ENCODE measurements at regions of chr9 and their contacts with region 1.

Region 1: DNA sequence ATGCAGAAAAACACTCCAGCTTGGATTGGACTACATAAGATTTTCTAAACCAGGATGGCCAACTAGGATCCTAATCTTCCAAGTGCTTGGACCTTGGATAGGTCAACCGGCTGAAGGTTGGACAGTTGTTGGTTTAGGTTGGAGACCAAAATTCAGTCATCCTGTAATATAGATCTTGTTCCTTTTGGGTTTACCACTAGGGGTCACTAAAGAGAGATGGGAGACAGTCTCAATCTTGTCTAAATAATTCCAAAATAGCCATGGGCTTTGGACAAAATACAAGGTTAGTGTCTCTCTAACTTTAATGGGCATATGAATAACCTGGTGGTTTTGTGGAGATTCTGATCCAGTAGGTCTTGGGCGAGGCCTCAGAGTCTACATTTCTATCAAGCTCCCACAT is 148.7 kb upstream of the ERCC6L2 start:
- DNase-seq: no peak
- H3K4me3 Mint-ChIP-seq: no peak overlapping the region
- H3K27ac Mint-ChIP-seq: no peak overlapping the region
- H3K4me1 Mint-ChIP-seq: peaks cover 41% of the 10 kb centered on the region
- H3K27me3 Mint-ChIP-seq: peaks cover 14% of the 10 kb centered on the region

Region 2: DNA sequence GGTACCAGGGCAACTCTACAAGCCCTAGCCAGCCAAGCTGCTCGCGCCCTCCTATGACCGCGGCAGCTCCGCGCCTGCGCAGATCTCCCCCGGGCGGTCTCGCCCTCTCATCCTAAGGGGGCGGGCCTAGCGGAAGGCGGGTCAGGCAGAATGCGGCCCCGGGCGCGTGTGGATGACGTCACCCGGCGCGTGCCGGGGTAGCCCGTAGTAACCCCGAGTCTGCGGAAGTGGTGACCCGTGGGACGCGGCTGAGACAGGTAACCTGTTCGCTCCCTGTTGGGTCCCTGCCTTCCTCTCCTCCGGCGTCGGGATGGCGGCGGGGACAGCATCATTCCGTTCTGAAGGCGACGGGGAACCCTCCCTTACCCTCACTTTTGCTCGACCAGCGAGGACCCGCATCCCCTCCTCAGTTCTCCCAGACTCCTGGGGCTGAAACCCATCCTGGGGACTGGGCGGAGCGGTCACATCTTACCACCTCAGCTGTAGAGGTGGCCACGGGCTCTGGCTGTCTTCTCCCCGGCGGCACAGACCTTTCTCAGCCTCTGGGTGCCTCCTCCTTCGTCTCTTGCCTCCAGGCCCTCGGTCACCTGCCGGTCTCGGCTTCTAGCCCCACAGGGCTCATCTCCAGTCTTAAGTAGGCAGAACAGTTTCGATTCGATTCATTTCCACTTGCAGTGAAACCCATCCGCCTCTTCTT is 1000.1 kb before region 1 on chr9 and contains the start of gene AOPEP:
- intact Hi-C with region 1: loop called (anchors 5 kb)
- DNase-seq: peak; percentile 99
- H3K4me3 Mint-ChIP-seq: peak within 1 kb of the TSS; percentile 94
- H3K27ac Mint-ChIP-seq: peak within 1 kb of the TSS; percentile 99
- H3K4me1 Mint-ChIP-seq: peaks cover 12% of the 10 kb centered on the region
- H3K27me3 Mint-ChIP-seq: peaks cover 2% of the 10 kb centered on the region
- total RNA-seq, gene AOPEP: 20.5 and 22.5 TPM in 2 replicates

Region 3: DNA sequence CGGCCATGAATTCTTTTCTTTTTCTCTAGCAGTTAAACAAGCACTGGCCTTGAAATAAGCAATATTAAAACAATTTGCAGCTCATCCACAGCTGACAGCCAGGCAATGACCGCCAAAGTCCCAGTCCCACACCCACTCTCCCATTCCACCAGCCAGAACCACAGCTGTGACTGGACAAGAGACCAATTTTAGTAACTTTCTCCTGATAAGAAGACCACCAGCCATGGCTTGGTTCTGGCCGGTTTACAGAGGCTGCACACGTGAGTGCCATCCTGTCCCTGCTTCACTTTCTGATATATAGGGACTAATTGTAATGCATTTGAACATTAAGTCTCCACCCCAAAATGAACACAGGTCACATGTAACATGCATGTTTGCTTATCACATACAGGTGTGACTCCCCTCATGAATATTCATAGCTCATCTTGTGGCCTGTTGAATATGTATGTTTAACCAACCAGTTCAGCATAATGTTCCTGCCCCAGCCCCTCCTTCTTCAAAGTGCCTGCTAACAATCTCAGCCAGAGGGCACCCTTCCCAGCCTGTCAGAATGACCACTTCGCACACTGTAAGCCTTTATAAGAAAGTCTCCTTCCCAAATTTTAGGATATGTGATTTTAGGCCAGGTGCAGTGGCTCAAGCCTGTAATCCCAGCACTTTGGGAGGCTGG is 385.3 kb before region 1 on chr9:
- intact Hi-C with region 1: loop called (anchors 1 kb)
- DNase-seq: no peak
- H3K4me3 Mint-ChIP-seq: no peak overlapping the region
- H3K27ac Mint-ChIP-seq: no peak overlapping the region
- H3K4me1 Mint-ChIP-seq: peaks cover 11% of the 10 kb centered on the region
- H3K27me3 Mint-ChIP-seq: no peaks in the 10 kb centered on the region

Region 4: GRCh38 chr9:95753762-95754465 is 27.2 kb after region 1 on chr9:
- intact Hi-C with region 1: loop called (anchors 2 kb)
- DNase-seq: no peak
- H3K4me3 Mint-ChIP-seq: no peak overlapping the region
- H3K27ac Mint-ChIP-seq: no peak overlapping the region
- H3K4me1 Mint-ChIP-seq: peaks cover 17% of the 10 kb centered on the region
- H3K27me3 Mint-ChIP-seq: peaks cover 31% of the 10 kb centered on the region

Region 5: GRCh38 chr9:95788021-95788420 is 61.3 kb after region 1 on chr9:
- intact Hi-C with region 1: no loop called
- DNase-seq: no peak
- H3K4me3 Mint-ChIP-seq: no peak overlapping the region
- H3K27ac Mint-ChIP-seq: no peak overlapping the region
- H3K4me1 Mint-ChIP-seq: peaks cover 9% of the 10 kb centered on the region
- H3K27me3 Mint-ChIP-seq: peaks cover 21% of the 10 kb centered on the region

Region 6: DNA sequence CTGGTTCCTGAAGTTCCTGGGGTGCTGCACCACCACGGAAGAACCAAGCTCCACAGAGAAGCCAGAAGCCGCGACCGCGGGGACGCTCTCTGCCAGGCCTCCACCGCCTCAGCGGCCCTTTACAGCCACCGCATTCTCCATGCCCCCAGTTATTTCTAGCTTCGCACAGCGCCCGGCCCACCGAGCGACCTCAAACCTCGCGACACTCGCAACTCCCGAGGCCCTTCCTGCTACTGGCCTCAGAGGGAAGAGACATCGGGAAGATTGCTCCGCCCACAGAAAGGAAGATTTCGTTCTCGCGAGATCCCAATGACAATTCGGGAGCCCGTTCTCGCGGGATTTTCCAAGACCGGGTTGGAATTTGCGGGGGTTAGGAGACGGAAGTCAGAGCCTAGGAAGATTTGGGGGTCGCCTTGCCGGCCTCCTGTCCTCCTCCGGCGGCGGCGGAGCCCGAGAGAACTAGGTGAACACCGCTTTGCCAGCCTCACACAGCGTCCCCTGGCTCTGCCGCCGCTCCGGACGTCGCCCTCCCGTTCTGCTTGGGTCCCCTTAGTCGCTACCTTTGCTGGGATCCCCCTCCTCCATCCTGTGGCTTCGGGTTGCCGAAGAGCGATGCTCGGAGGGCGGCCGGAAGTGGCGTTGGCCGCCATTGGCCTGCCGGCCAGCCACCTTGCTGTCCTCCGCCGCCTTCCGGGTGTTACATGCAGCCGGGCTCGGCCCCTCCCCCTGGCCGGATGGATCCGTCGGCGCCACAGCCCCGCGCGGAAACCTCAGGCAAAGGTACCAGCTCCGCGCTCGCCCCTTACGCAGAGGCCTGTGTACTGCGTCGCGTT is 148.8 kb after region 1 on chr9 and contains the start of gene ERCC6L2:
- intact Hi-C with region 1: loop called (anchors 1 kb)
- DNase-seq: peak; percentile 92
- H3K4me3 Mint-ChIP-seq: no peak within 1 kb of the TSS
- H3K27ac Mint-ChIP-seq: no peak within 1 kb of the TSS
- H3K4me1 Mint-ChIP-seq: peaks cover 33% of the 10 kb centered on the region
- H3K27me3 Mint-ChIP-seq: no peaks in the 10 kb centered on the region
- total RNA-seq, gene ERCC6L2: 31.2 and 33.7 TPM in 2 replicates

Region 7: DNA sequence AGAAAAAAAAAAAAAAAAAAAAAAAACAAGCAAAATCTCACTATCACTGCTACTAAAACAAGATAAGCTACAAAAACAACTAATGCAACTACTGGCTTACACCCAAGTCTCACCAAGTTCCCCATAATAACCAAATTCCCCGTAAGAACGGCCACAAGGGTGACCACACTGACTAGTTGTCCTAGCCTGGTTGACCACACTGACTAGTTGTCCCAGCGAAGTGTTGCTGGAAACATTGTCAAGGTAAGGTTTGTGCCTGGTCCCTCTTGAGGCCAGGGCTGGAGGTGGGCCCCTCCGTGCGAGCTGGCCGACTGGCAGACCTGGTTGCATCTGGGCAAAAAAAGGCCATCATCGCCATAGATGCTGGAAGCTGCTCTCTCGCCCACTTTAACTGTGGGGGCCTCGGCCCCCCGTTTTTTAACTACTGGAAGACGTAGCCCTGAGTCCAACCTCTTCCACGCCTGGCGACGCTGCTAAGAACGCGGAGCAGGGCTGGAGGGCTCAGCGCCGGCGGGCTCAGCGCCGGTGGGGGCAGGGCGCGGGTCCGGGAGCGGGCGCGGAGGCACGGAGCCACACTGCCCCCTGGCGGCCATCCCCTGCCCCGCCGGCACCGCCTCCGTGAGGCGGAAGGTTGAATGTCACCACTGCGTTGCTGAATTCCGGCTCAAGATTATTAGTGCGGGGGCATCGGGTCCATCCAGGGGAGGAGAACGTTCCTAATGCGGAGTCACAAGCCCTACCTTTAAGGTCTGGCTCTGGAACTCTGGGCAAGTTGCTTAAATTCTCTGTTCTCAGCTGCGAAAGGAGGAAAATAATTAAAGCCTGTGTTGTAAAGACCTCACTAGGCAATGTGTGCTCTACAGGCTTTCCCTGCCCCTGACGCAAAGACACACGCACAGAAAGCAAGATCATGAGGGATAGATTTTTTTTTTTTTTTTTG is 491.3 kb after region 1 on chr9:
- intact Hi-C with region 1: loop called (anchors 1 kb)
- DNase-seq: peak; percentile 59
- H3K4me3 Mint-ChIP-seq: peak overlapping the region; percentile 76
- H3K27ac Mint-ChIP-seq: no peak overlapping the region
- H3K4me1 Mint-ChIP-seq: peaks cover 15% of the 10 kb centered on the region
- H3K27me3 Mint-ChIP-seq: peaks cover 54% of the 10 kb centered on the region